ENCODE measurements at regions of chr2 and their contacts with region 1.

Region 1: GRCh38 chr2:70789304-70790135 is 923 bp downstream of the FIGLA start:
- DNase-seq: peak; percentile 89
- H3K4me3 Mint-ChIP-seq: peak overlapping the region; percentile 74
- H3K27ac Mint-ChIP-seq: no peak overlapping the region
- H3K4me1 Mint-ChIP-seq: peaks cover 14% of the 10 kb centered on the region
- H3K27me3 Mint-ChIP-seq: peaks cover 40% of the 10 kb centered on the region

Region 2: DNA sequence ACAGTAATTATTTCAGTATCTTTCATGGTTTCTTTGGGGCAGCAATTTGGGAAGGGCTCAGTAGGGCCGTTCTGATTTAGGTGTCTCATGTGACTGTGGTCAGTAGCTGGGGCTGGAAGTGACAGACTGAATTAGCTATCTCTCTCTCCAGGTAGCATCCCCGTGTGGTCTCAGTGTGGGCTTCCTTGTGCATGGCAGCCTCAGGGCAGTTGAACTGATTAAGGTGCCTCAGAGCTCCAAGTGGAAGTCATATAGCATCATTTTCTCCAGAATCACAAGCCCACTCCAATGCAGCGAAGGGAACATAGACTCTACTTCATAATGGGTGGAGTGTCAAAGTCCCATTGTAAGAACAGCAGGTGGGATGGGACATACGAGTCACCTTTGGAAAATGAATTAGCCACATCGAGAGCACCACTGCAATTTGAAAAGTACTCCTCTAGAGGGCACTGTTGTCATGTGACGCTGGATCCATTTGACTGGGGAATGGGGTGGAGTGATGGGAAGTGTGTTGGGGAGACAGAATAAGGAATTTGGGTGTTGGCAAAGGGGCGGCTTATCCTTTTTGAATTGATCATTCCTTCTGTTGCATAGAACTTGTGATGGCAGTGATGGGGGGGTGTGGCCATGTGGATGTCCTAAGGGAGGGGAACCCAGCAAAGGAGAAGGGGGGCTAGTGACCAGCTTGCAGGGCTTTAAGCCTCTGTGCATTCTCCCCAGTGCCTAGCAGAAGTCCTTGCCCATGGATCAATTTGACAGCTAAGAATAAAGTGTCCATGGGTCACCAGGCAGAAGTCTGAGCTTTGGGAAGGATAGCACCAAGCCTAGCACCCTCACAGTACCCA is 448.4 kb before region 1 on chr2:
- CTCF ChIA-PET with region 1: no interaction called
- intact Hi-C with region 1: loop called (anchors 10 kb)
- DNase-seq: peak; percentile 60
- H3K4me3 Mint-ChIP-seq: no peak overlapping the region
- H3K27ac Mint-ChIP-seq: no peak overlapping the region
- H3K4me1 Mint-ChIP-seq: peaks cover 5% of the 10 kb centered on the region
- H3K27me3 Mint-ChIP-seq: no peaks in the 10 kb centered on the region

Region 3: GRCh38 chr2:70656421-70657010 is 133.0 kb before region 1 on chr2:
- CTCF ChIA-PET with region 1: interaction called, 34 read pairs
- intact Hi-C with region 1: loop called (anchors 1 kb)
- DNase-seq: peak; percentile 62
- H3K4me3 Mint-ChIP-seq: no peak overlapping the region
- H3K27ac Mint-ChIP-seq: peak overlapping the region; percentile 23
- H3K4me1 Mint-ChIP-seq: peaks cover 20% of the 10 kb centered on the region
- H3K27me3 Mint-ChIP-seq: no peaks in the 10 kb centered on the region

Region 4: DNA sequence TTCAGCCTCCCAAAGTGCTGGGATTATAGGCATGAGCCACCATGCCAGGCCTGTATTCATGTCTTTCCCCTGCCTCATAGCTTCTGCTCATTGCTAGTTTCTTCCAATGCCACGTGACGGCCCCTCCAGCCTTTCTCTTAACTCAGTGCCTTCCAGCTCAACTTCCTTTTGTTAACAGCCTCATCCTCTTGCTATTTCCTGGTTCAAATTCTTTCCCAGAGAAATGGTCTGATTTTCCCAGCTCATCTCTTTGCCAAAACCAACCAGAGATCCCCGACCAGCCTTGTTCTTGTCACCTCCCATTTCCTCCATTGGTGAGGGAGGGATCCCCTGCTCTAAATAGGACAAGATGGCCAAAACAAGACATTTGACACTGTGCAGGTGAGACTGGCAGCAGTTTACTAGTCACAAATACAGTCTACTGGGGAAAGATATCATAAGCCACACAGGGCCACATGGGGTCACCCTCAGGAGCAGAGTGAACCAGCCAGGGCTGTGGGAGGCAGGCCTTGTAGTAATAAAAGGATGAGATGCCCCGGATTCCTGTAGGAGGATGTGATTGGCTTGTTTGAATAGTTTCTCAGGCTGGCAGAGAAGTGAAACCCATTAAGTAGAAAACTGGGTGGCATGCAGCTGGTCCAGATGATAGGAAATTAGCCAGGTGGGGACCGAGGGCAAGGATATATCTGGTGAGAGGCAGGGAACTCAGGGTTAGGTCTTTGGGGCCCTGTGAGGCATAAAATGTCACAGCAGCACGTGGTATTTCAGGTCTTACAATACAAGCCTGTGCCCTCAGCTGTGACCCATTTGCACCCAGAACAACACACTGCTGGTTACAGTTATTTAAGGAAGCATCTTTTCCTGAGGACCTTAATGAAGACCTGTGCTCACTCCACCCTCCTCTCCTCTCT is 39.6 kb after region 1 on chr2:
- CTCF ChIA-PET with region 1: no interaction called
- intact Hi-C with region 1: no loop called
- DNase-seq: no peak
- H3K4me3 Mint-ChIP-seq: no peak overlapping the region
- H3K27ac Mint-ChIP-seq: no peak overlapping the region
- H3K4me1 Mint-ChIP-seq: peaks cover 25% of the 10 kb centered on the region
- H3K27me3 Mint-ChIP-seq: no peaks in the 10 kb centered on the region

Region 5: GRCh38 chr2:70851704-70852103 is 62.2 kb after region 1 on chr2:
- CTCF ChIA-PET with region 1: interaction called, 4 read pairs
- intact Hi-C with region 1: loop called (anchors 1 kb)
- DNase-seq: peak; percentile 71
- H3K4me3 Mint-ChIP-seq: no peak overlapping the region
- H3K27ac Mint-ChIP-seq: peak overlapping the region; percentile 83
- H3K4me1 Mint-ChIP-seq: peaks cover 28% of the 10 kb centered on the region
- H3K27me3 Mint-ChIP-seq: no peaks in the 10 kb centered on the region

Region 6: DNA sequence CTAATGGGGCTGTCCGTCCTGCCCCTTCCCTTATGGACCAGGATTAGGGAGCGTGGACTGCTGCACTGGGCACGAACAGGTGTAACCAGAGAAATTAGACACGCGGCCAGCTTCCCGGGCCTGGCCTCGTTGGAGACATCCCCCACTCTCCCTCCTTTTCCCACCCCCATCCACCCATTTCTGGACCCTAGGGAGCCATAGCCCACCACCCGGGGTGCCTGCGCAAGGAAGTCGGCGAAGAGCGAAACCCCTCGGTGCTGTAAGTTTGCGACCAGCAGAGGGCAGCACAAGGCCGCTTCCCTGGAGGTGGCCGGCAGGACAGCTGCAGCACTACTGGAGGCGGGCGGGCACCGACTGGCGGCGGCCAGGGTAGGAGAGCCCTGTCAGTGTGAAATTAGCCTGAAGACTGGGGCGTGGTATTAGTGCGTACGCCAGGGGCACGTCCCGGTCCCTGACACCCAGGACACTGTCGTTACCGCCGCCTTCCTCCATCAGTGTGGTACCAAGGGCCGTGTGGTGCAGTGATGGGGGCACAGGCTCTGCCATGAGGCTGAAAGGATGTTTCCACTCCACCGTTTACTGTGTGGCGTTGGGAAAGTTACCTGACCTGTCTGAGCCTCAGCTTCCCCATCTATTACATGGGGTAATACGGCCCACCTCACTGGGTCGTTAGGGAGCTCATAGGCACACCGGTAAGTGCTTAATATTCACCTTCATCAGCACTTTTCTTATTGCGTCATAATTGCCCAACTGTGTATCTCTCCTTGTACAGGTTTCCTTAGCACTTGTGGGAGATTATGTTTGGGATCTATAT is 82.1 kb after region 1 on chr2:
- CTCF ChIA-PET with region 1: interaction called, 36 read pairs
- intact Hi-C with region 1: no loop called
- DNase-seq: peak; percentile 90
- H3K4me3 Mint-ChIP-seq: no peak overlapping the region
- H3K27ac Mint-ChIP-seq: no peak overlapping the region
- H3K4me1 Mint-ChIP-seq: peaks cover 5% of the 10 kb centered on the region
- H3K27me3 Mint-ChIP-seq: peaks cover 32% of the 10 kb centered on the region

Measured in activated naive CD4-positive, alpha-beta T cell treated with anti-CD3 and anti-CD28 coated beads for 36 hours (primary cell).